ENCODE measurements at regions of chr12 and their contacts with region 1.

Region 1: GRCh38 chr12:24754690-24755638 is 193.9 kb downstream of the BCAT1 start:
- DNase-seq: peak; percentile 94 to 95
- H3K4me3 ChIP-seq: no peak overlapping the region
- H3K4me3 Mint-ChIP-seq: peak overlapping the region; percentile 70
- H3K27ac Mint-ChIP-seq: peak overlapping the region; percentile 97
- H3K4me1 ChIP-seq: peaks cover 78% of the 10 kb centered on the region
- H3K4me1 Mint-ChIP-seq: peaks cover 52% of the 10 kb centered on the region
- H3K27me3 ChIP-seq: no peaks in the 10 kb centered on the region
- H3K27me3 Mint-ChIP-seq: no peaks in the 10 kb centered on the region
- CTCF ChIP-seq: no peak

Region 2: DNA sequence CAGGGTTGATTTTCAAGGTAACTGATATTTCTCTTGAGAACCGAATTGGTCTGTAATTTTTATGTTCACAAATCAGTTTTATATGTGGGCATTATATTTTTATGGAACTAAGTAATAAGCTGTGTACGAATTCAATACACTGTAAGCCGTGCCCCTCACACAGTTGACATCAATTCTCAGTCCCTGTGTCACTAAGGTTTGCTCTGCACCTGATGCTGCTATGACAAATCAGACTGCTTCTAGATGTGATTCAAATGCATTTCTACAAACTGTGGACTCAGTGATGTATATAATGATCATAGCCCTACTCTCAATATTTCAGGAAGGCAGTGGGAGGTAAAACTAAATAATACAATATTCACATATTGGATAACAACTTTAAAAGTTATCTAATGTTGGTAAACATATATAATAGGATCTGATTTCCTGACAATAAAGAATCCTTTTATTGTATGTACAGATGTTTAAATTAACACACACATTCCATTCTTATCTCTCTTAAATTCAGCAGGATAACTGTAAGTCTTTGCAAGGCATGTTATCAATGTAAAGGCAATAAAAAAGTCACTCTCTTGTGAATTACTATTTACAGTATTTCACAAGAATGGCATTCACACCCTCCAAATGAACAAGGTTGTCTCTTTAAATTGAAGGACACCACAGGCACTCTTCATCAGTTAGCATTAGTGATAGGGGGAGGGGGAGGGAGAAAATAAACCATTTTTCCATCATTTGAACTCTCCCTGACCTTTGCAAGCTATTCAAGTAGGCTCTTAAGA is 718.3 kb before region 1 on chr12:
- CTCF ChIA-PET with region 1: no interaction called
- POLR2A ChIA-PET with region 1: no interaction called
- intact Hi-C with region 1: loop called (anchors 2 kb)
- DNase-seq: peak in 1 of 2 experiments; percentile 36
- H3K4me3 ChIP-seq: no peak overlapping the region
- H3K4me3 Mint-ChIP-seq: no peak overlapping the region
- H3K27ac Mint-ChIP-seq: no peak overlapping the region
- H3K4me1 ChIP-seq: peaks cover 38% of the 10 kb centered on the region
- H3K4me1 Mint-ChIP-seq: peaks cover 28% of the 10 kb centered on the region
- H3K27me3 ChIP-seq: no peaks in the 10 kb centered on the region
- H3K27me3 Mint-ChIP-seq: no peaks in the 10 kb centered on the region
- CTCF ChIP-seq: no peak

Region 3: GRCh38 chr12:24561882-24562760 is 192.8 kb before region 1 on chr12:
- CTCF ChIA-PET with region 1: no interaction called
- POLR2A ChIA-PET with region 1: interaction called, 3 read pairs
- intact Hi-C with region 1: loop called (anchors 1 kb)
- DNase-seq: peak; percentile 74 to 82
- H3K4me3 ChIP-seq: peak overlapping the region; percentile 84
- H3K4me3 Mint-ChIP-seq: peak overlapping the region; percentile 94
- H3K27ac Mint-ChIP-seq: peak overlapping the region; percentile 73
- H3K4me1 ChIP-seq: peaks cover 41% of the 10 kb centered on the region; the same call in 1 of the 2 replicates
- H3K4me1 Mint-ChIP-seq: peaks cover 30% of the 10 kb centered on the region
- H3K27me3 ChIP-seq: no peaks in the 10 kb centered on the region
- H3K27me3 Mint-ChIP-seq: no peaks in the 10 kb centered on the region
- CTCF ChIP-seq: no peak

Region 4: GRCh38 chr12:24617471-24617870 is 137.5 kb before region 1 on chr12:
- CTCF ChIA-PET with region 1: no interaction called
- POLR2A ChIA-PET with region 1: interaction called, 8 read pairs
- intact Hi-C with region 1: loop called (anchors 1 kb)
- DNase-seq: no peak
- H3K4me3 ChIP-seq: no peak overlapping the region
- H3K4me3 Mint-ChIP-seq: peak overlapping the region; percentile 65
- H3K27ac Mint-ChIP-seq: peak overlapping the region; percentile 87
- H3K4me1 ChIP-seq: peaks cover 27% of the 10 kb centered on the region
- H3K4me1 Mint-ChIP-seq: peaks cover 31% of the 10 kb centered on the region
- H3K27me3 ChIP-seq: no peaks in the 10 kb centered on the region
- H3K27me3 Mint-ChIP-seq: no peaks in the 10 kb centered on the region
- CTCF ChIP-seq: no peak

Region 5: DNA sequence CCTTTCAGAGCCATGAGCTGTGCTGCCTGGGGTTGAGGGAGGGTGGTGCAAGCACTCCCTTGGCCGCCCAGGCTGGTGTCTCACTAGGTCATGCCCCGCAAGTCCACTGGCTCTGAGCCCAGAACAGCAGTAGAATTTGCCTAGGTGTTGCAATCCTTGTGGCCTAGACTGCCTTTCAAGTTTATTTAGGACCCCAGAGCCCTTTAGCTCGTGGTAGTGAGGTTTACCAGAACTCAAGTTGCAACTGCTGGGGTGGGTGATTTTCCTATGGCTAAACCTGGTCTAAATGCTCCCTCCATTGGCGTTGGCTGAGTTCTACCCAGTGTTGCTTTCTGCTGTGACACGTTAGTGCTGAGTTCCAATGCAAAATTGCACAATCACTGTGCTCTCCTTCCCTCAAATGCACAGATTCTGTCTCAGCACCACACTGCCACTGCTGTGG is 93.3 kb before region 1 on chr12:
- CTCF ChIA-PET with region 1: no interaction called
- POLR2A ChIA-PET with region 1: no interaction called
- intact Hi-C with region 1: no loop called
- DNase-seq: no peak
- H3K4me3 ChIP-seq: no peak overlapping the region
- H3K4me3 Mint-ChIP-seq: no peak overlapping the region
- H3K27ac Mint-ChIP-seq: no peak overlapping the region
- H3K4me1 ChIP-seq: no peaks in the 10 kb centered on the region
- H3K4me1 Mint-ChIP-seq: peaks cover 6% of the 10 kb centered on the region
- H3K27me3 ChIP-seq: no peaks in the 10 kb centered on the region
- H3K27me3 Mint-ChIP-seq: no peaks in the 10 kb centered on the region
- CTCF ChIP-seq: no peak

Region 6: GRCh38 chr12:24695657-24696329 is 59.2 kb before region 1 on chr12:
- CTCF ChIA-PET with region 1: no interaction called
- POLR2A ChIA-PET with region 1: no interaction called
- intact Hi-C with region 1: loop called (anchors 1 kb)
- DNase-seq: no peak
- H3K4me3 ChIP-seq: no peak overlapping the region
- H3K4me3 Mint-ChIP-seq: no peak overlapping the region
- H3K27ac Mint-ChIP-seq: no peak overlapping the region
- H3K4me1 ChIP-seq: peaks cover 31% of the 10 kb centered on the region
- H3K4me1 Mint-ChIP-seq: peaks cover 22% of the 10 kb centered on the region
- H3K27me3 ChIP-seq: no peaks in the 10 kb centered on the region
- H3K27me3 Mint-ChIP-seq: no peaks in the 10 kb centered on the region
- CTCF ChIP-seq: no peak

Region 7: GRCh38 chr12:24767016-24767415 is 12.1 kb after region 1 on chr12:
- CTCF ChIA-PET with region 1: no interaction called
- POLR2A ChIA-PET with region 1: interaction called, 4 read pairs
- intact Hi-C with region 1: loop called (anchors 1 kb)
- DNase-seq: peak in 1 of 2 experiments; percentile 19
- H3K4me3 ChIP-seq: no peak overlapping the region
- H3K4me3 Mint-ChIP-seq: no peak overlapping the region
- H3K27ac Mint-ChIP-seq: no peak overlapping the region
- H3K4me1 ChIP-seq: peaks cover 3% of the 10 kb centered on the region; the same call in 1 of the 2 replicates
- H3K4me1 Mint-ChIP-seq: no peaks in the 10 kb centered on the region
- H3K27me3 ChIP-seq: no peaks in the 10 kb centered on the region
- H3K27me3 Mint-ChIP-seq: no peaks in the 10 kb centered on the region
- CTCF ChIP-seq: no peak

Measured in Caco-2 (cell line).